Right cardiac atrium (tissue), 5 donors: ENCODE measurements at regions of chr2 and their contacts with region 1.

Region 1: GRCh38 chr2:71331581-71332434 is at the start of gene ZNF638:
- DNase-seq: peak; percentile 96 to 98 (median 98)
- ATAC-seq: peak; percentile 99
- H3K4me3 ChIP-seq: peak within 1 kb of the TSS; percentile 80
- H3K27ac ChIP-seq: peak within 1 kb of the TSS; percentile 93
- H3K4me1 ChIP-seq: no peaks in the 10 kb centered on the region
- H3K27me3 ChIP-seq: no peaks in the 10 kb centered on the region
- total RNA-seq, gene ZNF638: 72.3 to 84.2 (median 78.9) TPM

Region 2: DNA sequence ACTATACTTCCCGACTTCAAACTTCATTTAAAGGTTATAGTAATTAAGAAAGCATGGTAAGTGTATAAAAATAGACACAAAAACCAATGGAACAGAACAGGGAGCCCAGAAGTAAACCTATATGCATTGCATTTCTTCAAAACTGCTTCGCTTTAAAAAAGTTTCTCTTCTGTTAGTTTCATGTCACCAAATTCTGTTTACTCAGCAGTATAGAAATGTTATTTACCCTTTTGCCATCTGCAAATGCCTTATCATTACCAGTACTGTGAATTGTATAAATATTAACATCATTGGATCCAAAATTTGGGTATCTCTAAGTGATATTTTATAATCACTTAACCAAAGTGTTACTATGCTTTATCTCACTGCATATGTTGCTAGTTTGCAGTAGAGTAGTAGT is 46.1 kb before region 1 on chr2:
- intact Hi-C with region 1: loop called in 1 of 4 experiments (anchors 5 kb)
- DNase-seq: no peak
- ATAC-seq: no peak
- H3K4me3 ChIP-seq: no peak overlapping the region
- H3K27ac ChIP-seq: no peak overlapping the region
- H3K4me1 ChIP-seq: no peaks in the 10 kb centered on the region
- H3K27me3 ChIP-seq: no peaks in the 10 kb centered on the region

Region 3: GRCh38 chr2:71524476-71524875 is 192.7 kb after region 1 on chr2:
- intact Hi-C with region 1: no loop called
- DNase-seq: no peak
- ATAC-seq: no peak
- H3K4me3 ChIP-seq: no peak overlapping the region
- H3K27ac ChIP-seq: no peak overlapping the region
- H3K4me1 ChIP-seq: no peaks in the 10 kb centered on the region
- H3K27me3 ChIP-seq: no peaks in the 10 kb centered on the region